Left ventricle myocardium superior (tissue), 1 donor: ENCODE measurements at regions of chr20 and their contacts with region 1.

Region 1: DNA sequence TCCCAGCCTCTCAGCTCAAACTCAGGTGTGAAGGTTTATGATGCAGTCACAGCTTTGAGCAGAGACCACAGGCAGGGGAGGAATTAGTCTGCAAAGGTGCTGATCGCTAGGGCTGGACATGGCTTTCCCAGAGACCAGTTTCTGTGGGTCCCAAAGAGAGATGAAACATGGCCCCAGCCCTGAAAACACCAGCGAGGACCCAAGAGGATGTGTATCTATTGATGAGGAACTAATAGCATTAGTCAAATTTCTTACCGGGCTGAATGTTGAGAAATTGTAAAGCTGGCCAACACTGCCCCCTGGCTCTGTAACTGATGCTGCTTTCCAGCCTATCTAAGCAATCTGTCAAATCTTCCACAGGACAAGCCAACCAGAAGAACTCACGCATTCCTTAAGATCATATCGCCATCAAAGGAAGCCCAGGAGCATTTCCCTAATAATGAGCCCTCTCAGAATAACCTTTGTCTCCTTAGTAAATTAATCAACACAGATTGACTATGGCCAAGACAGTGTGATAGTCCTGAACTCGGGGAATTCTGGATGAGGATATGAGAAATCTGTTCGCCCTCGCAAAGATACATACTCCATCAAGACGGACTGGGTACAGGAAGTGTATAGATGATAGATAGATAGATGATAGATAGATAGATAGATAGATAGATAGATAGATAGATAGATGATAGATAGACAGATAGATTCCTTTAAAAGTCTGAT is 7.8 kb upstream of the ACSS1 start:
- DNase-seq: peak; percentile 68
- ATAC-seq: peak; percentile 82

Region 2: GRCh38 chr20:24992487-24993205 is 73.1 kb before region 1 on chr20 and contains the start of gene APMAP:
- intact Hi-C with region 1: loop called (anchors 2 kb)
- DNase-seq: peak; percentile 99
- ATAC-seq: peak; percentile 92
- total RNA-seq, gene APMAP: 25.9 TPM

Region 3: DNA sequence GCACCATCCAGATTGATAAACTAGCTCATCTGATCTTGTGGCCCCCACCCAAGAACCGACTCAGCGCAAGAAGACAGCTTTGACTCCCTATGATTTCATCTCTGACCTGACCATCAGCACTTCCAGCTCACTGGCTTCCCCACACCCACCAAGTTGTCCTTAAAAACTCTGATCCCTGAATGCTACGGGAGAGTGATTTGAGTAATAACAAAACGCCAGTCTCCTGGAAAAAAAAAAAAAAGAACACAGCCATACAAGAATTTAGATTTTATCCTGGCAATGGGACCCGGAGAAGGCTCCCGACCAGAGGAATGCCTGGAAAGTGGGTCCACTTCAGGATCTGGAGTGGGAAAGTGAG is 262.1 kb after region 1 on chr20:
- intact Hi-C with region 1: no loop called
- DNase-seq: no peak
- ATAC-seq: no peak